ENCODE measurements at regions of chr19 and their contacts with region 1.

Region 1: GRCh38 chr19:53103198-53103944 is at the start of gene ZNF160:
- DNase-seq: peak; percentile 98
- H3K4me3 Mint-ChIP-seq: peak within 1 kb of the TSS; percentile 92
- H3K27ac Mint-ChIP-seq: peak within 1 kb of the TSS; percentile 95
- H3K4me1 Mint-ChIP-seq: peaks cover 23% of the 10 kb centered on the region
- H3K27me3 Mint-ChIP-seq: no peaks in the 10 kb centered on the region
- total RNA-seq, gene ZNF160: 26.0 and 27.8 TPM in 2 replicates

Region 2: GRCh38 chr19:52139252-52140031 is 963.9 kb before region 1 on chr19 and contains the start of gene ZNF616:
- intact Hi-C with region 1: loop called (anchors 2 kb)
- DNase-seq: peak; percentile 94
- H3K4me3 Mint-ChIP-seq: peak within 1 kb of the TSS; percentile 98
- H3K27ac Mint-ChIP-seq: peak within 1 kb of the TSS; percentile 94
- H3K4me1 Mint-ChIP-seq: peaks cover 23% of the 10 kb centered on the region
- H3K27me3 Mint-ChIP-seq: no peaks in the 10 kb centered on the region
- total RNA-seq, gene ZNF616: 4.1 and 6.7 TPM in 2 replicates

Region 3: GRCh38 chr19:52637718-52638585 is 465.4 kb before region 1 on chr19 and contains the start of gene ZNF83:
- intact Hi-C with region 1: loop called (anchors 1 kb)
- DNase-seq: peak; percentile 94
- H3K4me3 Mint-ChIP-seq: peak within 1 kb of the TSS; percentile 93
- H3K27ac Mint-ChIP-seq: peak within 1 kb of the TSS; percentile 95
- H3K4me1 Mint-ChIP-seq: peaks cover 26% of the 10 kb centered on the region
- H3K27me3 Mint-ChIP-seq: no peaks in the 10 kb centered on the region
- total RNA-seq, gene ZNF83: 23.5 and 25.8 TPM in 2 replicates

Region 4: DNA sequence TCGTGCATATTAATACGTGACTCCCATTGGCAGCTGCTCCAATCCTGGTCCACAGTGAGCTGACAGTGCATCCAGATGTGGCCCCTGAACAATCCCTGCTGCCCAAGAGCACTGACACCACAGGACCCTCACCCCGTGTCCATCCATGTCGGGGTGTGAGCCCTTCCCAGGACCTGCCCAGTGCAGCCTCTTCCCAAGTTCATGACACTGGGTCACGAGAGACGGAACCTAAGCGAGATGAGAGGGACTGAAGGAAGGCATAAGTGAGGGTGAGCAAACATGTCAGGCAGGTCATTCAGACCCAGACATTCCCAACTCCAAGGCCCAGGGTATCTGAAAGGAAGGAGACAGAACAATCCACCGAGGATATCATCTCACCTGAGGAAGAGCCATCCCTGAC is 249.5 kb before region 1 on chr19:
- intact Hi-C with region 1: loop called (anchors 1 kb)
- DNase-seq: no peak
- H3K4me3 Mint-ChIP-seq: no peak overlapping the region
- H3K27ac Mint-ChIP-seq: no peak overlapping the region
- H3K4me1 Mint-ChIP-seq: peaks cover 22% of the 10 kb centered on the region
- H3K27me3 Mint-ChIP-seq: no peaks in the 10 kb centered on the region

Region 5: GRCh38 chr19:52962394-52963246 is 140.8 kb before region 1 on chr19 and contains the start of gene ZNF816:
- intact Hi-C with region 1: loop called (anchors 1 kb)
- DNase-seq: peak; percentile 99
- H3K4me3 Mint-ChIP-seq: peak within 1 kb of the TSS; percentile 98
- H3K27ac Mint-ChIP-seq: peak within 1 kb of the TSS; percentile 93
- H3K4me1 Mint-ChIP-seq: peaks cover 25% of the 10 kb centered on the region
- H3K27me3 Mint-ChIP-seq: no peaks in the 10 kb centered on the region
- total RNA-seq, gene ZNF816: 7.0 and 9.4 TPM in 2 replicates

Region 6: DNA sequence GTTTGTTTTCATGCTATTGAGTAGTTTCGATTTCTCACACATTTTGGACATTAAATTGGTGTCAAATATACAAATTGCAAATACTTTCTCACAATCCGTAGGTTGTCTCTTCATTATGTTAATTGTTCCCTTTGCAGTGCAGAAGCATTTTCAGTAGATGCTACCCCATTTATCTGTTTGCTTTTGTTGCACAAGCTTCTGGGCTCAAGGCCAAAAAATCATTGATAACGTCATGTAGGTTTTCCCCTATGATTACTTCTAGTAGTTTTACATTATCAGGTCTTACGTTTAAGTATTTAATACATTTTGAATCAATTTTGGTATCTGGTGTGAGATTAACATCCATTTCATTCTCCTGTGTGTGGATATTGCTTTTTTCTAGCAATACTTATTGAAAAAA is 69.5 kb after region 1 on chr19:
- intact Hi-C with region 1: no loop called
- DNase-seq: no peak
- H3K4me3 Mint-ChIP-seq: no peak overlapping the region
- H3K27ac Mint-ChIP-seq: no peak overlapping the region
- H3K4me1 Mint-ChIP-seq: no peaks in the 10 kb centered on the region
- H3K27me3 Mint-ChIP-seq: no peaks in the 10 kb centered on the region

Region 7: DNA sequence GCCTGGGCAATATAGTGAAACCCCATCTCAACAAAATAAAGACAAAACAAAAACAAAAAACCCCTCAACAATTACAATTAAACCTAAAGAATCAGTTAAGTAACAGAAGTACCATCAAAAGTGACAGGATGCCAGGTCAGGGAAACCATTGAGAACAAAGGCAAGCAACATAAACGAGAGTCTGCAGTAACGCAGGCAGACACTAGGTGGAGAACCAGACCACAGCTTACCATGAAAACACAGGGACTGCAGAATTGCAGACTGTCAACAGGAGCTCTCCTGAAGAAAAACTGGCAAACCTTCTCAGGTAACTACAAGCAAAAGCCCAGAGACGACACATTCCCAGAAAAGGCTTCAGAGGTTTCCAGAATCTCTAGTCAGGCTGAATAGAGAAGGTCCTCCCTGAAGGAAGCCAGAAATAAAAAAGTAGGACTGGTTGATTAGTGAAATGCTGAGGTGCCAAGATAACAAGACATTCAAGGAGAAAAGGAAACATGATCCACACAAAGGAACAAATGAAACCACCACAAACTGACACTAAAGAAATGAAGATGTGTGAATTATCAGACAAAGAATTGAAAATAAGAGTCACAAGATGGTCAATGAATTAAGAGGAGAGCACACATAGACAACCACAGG is 92.0 kb after region 1 on chr19:
- intact Hi-C with region 1: loop called (anchors 1 kb)
- DNase-seq: peak; percentile 65
- H3K4me3 Mint-ChIP-seq: peak overlapping the region; percentile 46
- H3K27ac Mint-ChIP-seq: no peak overlapping the region
- H3K4me1 Mint-ChIP-seq: peaks cover 32% of the 10 kb centered on the region
- H3K27me3 Mint-ChIP-seq: no peaks in the 10 kb centered on the region

Region 8: GRCh38 chr19:53431399-53432087 is 328.2 kb after region 1 on chr19 and contains the start of gene ZNF761:
- intact Hi-C with region 1: loop called (anchors 10 kb)
- DNase-seq: peak; percentile 96
- H3K4me3 Mint-ChIP-seq: peak within 1 kb of the TSS; percentile 88
- H3K27ac Mint-ChIP-seq: peak within 1 kb of the TSS; percentile 94
- H3K4me1 Mint-ChIP-seq: peaks cover 25% of the 10 kb centered on the region
- H3K27me3 Mint-ChIP-seq: no peaks in the 10 kb centered on the region
- total RNA-seq, gene ZNF761: 9.9 and 12.3 TPM in 2 replicates

Measured in activated T-helper 1 cell treated with anti-CD3 and anti-CD28 coated beads, Interleukin-12 subunit alpha, Interleukin-12 subunit beta, Interleukin-2, Interleukin-4 antibody, amounts not matched to agents 30 ng/mL and 10 ng/mL and 1 ng/mL, durations not matched to agents 14 hours and 24 hours and 36 hours (primary cell).